ENCODE measurements at regions of chr13 and their contacts with region 1.

Region 1: DNA sequence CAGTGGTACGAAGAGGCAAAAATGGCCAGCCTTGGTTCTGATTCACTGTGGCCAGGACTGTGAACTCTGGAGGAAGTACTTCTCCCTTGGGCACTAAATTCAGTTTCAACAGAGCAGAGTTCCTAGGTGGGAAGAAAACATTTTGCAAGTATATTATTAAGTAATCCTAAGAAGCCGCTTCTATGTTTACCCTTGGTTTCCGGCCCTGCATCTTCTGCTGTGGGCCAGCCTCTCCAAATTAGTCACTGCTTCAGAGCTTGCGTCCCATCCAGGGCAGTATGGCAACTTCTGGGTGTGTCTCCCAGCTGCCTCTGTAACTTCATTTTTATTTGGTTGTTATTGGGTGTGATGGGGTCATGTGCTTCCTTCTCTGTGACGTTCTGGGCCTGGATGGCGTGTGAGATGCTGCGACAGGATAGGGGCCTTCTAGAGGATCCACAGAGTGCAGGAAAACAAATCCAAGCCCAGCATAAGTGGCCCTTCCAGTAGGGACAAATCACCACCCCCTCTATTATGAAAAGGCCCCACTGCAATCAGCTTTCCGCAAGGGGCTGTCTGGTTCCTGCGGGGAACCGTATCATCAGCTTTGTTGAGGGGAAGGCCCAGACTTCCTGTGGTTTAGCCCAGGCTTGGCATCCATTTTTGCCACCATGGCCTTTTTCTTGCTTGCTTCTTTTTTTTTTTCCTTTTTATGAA is 55.1 kb upstream of the C1QTNF9 start:
- DNase-seq: peak in 34 of 35 experiments; percentile 46 to 85 (median 61)
- ATAC-seq: peak; percentile 59 to 64 (median 62)
- H3K4me3 ChIP-seq: peak overlapping the region; percentile 75 to 92
- H3K4me3 Mint-ChIP-seq: peak overlapping the region; percentile 85 to 97 (median 96)
- H3K27ac ChIP-seq: peak overlapping the region; percentile 96
- H3K27ac Mint-ChIP-seq: peak overlapping the region; percentile 98 to 99
- H3K4me1 ChIP-seq: peaks cover 48 to 69% of the 10 kb centered on the region in 2 experiments
- H3K4me1 Mint-ChIP-seq: peaks cover 84 to 98% (median 92%) of the 10 kb centered on the region in 3 donors
- H3K27me3 ChIP-seq: no peaks in the 10 kb centered on the region
- H3K27me3 Mint-ChIP-seq: no peaks in the 10 kb centered on the region

Region 2: GRCh38 chr13:24264976-24265375 is 10.7 kb after region 1 on chr13:
- CTCF ChIA-PET with region 1: interaction called, 6 to 32 read pairs
- POLR2A ChIA-PET with region 1: interaction called, 13 to 93 read pairs
- DNase-seq: peak; percentile 60 to 89 (median 79)
- ATAC-seq: peak; percentile 93 to 97 (median 96)
- H3K4me3 ChIP-seq: peak overlapping the region; percentile 6 to 15
- H3K4me3 Mint-ChIP-seq: peak overlapping the region; percentile 69 to 94 (median 75)
- H3K27ac ChIP-seq: peak overlapping the region; percentile 88
- H3K27ac Mint-ChIP-seq: peak overlapping the region; percentile 98 to 99
- H3K4me1 ChIP-seq: peaks cover 75 to 76% of the 10 kb centered on the region in 2 experiments
- H3K4me1 Mint-ChIP-seq: peaks cover 95 to 99% (median 95%) of the 10 kb centered on the region in 3 donors
- H3K27me3 ChIP-seq: no peaks in the 10 kb centered on the region
- H3K27me3 Mint-ChIP-seq: no peaks in the 10 kb centered on the region

Region 3: GRCh38 chr13:24270639-24271141 is 16.4 kb after region 1 on chr13:
- CTCF ChIA-PET with region 1: interaction called, 7 to 32 read pairs
- POLR2A ChIA-PET with region 1: interaction called, 13 to 93 read pairs
- DNase-seq: peak in 33 of 35 experiments; percentile 28 to 76 (median 45)
- ATAC-seq: peak; percentile 28 to 43 (median 42)
- H3K4me3 ChIP-seq: peak overlapping the region; percentile 53 to 75
- H3K4me3 Mint-ChIP-seq: peak overlapping the region; percentile 87 to 94 (median 91)
- H3K27ac ChIP-seq: peak overlapping the region; percentile 83
- H3K27ac Mint-ChIP-seq: peak overlapping the region; percentile 96 to 99
- H3K4me1 ChIP-seq: peaks cover 77 to 87% of the 10 kb centered on the region in 2 experiments
- H3K4me1 Mint-ChIP-seq: peaks cover 90 to 97% (median 94%) of the 10 kb centered on the region in 3 donors
- H3K27me3 ChIP-seq: no peaks in the 10 kb centered on the region
- H3K27me3 Mint-ChIP-seq: no peaks in the 10 kb centered on the region

Region 4: DNA sequence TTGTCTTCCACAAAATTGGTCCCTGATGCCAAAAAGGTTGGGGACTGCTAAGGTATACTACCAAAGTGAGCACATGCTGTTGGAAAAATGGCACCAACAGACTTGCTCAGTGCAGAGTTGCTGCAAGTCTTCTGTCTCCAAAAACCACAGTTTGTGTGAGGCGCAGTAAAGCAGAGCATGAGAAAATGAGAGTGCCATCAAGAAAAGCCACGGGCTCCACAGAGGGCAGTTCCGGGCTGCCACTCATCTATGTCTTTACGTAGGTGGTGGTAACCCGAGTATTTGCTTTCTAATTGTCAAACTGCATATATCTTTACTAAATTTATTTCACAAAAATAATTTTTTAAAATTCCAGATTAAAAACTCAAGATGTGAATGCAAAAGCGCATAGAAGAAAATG is 633.5 kb after region 1 on chr13:
- CTCF ChIA-PET with region 1: no interaction called
- POLR2A ChIA-PET with region 1: no interaction called
- DNase-seq: no peak
- ATAC-seq: no peak
- H3K4me3 ChIP-seq: no peak overlapping the region
- H3K4me3 Mint-ChIP-seq: no peak overlapping the region
- H3K27ac ChIP-seq: no peak overlapping the region
- H3K27ac Mint-ChIP-seq: no peak overlapping the region
- H3K4me1 ChIP-seq: no peaks in the 10 kb centered on the region
- H3K4me1 Mint-ChIP-seq: no peaks in the 10 kb centered on the region
- H3K27me3 ChIP-seq: no peaks in the 10 kb centered on the region
- H3K27me3 Mint-ChIP-seq: no peaks in the 10 kb centered on the region

Measured in T-cell (primary cell).